ENCODE measurements at regions of chr7 and their contacts with region 1.

Region 1: GRCh38 chr7:2477447-2478398 is 1.5 kb upstream of the GRIFIN start:
- DNase-seq: peak; percentile 62 to 74 (median 67)
- H3K4me3 ChIP-seq: no peak overlapping the region
- H3K27ac ChIP-seq: no peak overlapping the region
- H3K4me1 ChIP-seq: peaks cover 0 to 17% of the 10 kb centered on the region in 2 donors
- H3K27me3 ChIP-seq: peaks cover 10% of the 10 kb centered on the region
- CTCF ChIP-seq: peak; percentile 62 to 92 (median 76)
- POLR2A ChIP-seq: no peak

Region 2: DNA sequence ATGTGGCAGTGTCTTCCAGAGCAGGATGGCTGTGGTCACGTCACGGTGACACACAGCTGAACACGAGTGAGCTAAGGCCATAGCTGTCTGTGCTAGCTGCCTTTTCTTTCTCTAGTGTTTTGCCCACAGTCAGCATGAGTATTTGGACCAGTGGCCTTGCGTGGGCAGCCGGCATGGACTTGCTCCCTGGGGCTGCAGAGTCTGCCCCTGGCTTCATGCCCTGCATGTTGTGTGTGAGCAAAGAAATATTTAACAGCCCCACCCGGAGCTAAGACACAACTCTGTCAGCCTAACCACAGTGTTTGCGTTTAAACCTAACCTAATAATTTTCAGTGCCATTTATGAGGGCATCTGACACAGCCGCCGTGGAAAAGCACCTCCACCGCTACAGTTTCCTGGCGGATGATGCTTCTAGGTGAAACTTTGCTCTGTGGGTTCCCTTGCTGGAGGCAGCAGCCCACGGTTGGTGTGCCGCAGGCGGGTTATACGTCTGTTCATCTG is 59.7 kb before region 1 on chr7:
- intact Hi-C with region 1: no loop called
- DNase-seq: peak in 2 of 7 donors; percentile 26 to 48
- H3K4me3 ChIP-seq: no peak overlapping the region
- H3K27ac ChIP-seq: no peak overlapping the region
- H3K4me1 ChIP-seq: peaks cover 11% of the 10 kb centered on the region in 2 donors
- H3K27me3 ChIP-seq: no peaks in the 10 kb centered on the region
- CTCF ChIP-seq: no peak
- POLR2A ChIP-seq: no peak

Region 3: GRCh38 chr7:2519119-2519930 is 41.6 kb after region 1 on chr7 and contains the start of gene LFNG:
- intact Hi-C with region 1: loop called in 1 of 2 experiments (anchors 2 kb)
- DNase-seq: peak; percentile 80 to 90 (median 89)
- H3K4me3 ChIP-seq: peak within 1 kb of the TSS in 2 of 4 donors; percentile 23 to 71
- H3K27ac ChIP-seq: peak within 1 kb of the TSS in 2 of 5 donors; percentile 57 to 85
- H3K4me1 ChIP-seq: peaks cover 32 to 44% of the 10 kb centered on the region in 2 donors
- H3K27me3 ChIP-seq: no peaks in the 10 kb centered on the region
- CTCF ChIP-seq: peak in 1 of 6 experiments; percentile 24
- POLR2A ChIP-seq: peak; percentile 90 to 91
- total RNA-seq, gene LFNG: 3.7 to 26.1 (median 13.0) TPM

Region 4: GRCh38 chr7:2529161-2530070 is 51.7 kb after region 1 on chr7:
- intact Hi-C with region 1: no loop called
- DNase-seq: peak; percentile 72 to 86 (median 81)
- H3K4me3 ChIP-seq: peak overlapping the region in 1 of 4 donors; percentile 3
- H3K27ac ChIP-seq: peak overlapping the region; percentile 77 to 95 (median 84)
- H3K4me1 ChIP-seq: peaks cover 43 to 51% of the 10 kb centered on the region in 2 donors
- H3K27me3 ChIP-seq: no peaks in the 10 kb centered on the region
- CTCF ChIP-seq: peak in 1 of 6 experiments; percentile 0
- POLR2A ChIP-seq: no peak

Region 5: DNA sequence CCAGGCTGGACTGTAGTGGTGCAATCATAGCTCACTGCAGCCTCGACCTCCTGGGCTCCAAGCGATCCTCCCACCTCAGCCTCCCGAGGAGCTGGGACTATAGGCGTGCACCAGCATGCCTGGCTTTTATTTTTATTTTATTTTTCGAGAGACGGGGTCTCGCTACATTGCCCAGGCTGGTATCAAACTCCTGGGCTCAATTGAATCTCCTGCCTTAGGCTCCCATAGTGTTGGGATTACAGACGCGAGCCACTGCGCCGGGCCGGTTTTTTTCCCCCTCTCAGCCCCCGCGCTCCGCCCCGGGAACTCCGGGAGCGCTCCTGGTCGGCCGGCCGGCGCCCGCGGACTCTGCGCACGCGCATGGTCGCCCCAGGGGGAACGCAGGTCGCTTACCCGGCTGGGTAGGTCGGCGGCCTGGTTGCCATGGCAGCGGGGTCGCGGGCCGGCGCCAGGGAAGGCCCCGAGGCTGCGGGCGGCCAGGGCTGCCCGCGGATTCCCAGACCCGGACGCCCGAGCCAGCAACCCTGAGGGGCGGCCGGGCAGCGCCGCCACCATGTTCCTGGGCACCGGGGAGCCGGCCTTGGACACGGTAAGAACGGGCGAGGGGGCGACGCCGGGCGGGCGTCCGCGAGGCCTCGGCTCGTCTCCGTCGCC is 81.0 kb after region 1 on chr7 and contains the start of gene IQCE:
- intact Hi-C with region 1: loop called in 1 of 2 experiments (anchors 2 kb)
- DNase-seq: peak; percentile 94 to 97 (median 96)
- H3K4me3 ChIP-seq: peak within 1 kb of the TSS; percentile 37 to 99 (median 66)
- H3K27ac ChIP-seq: peak within 1 kb of the TSS; percentile 72 to 90 (median 83)
- H3K4me1 ChIP-seq: peaks cover 28 to 38% of the 10 kb centered on the region in 2 donors
- H3K27me3 ChIP-seq: no peaks in the 10 kb centered on the region
- CTCF ChIP-seq: no peak
- POLR2A ChIP-seq: peak in 1 of 2 donors; percentile 37
- total RNA-seq, gene IQCE: 4.6 to 33.2 (median 13.8) TPM

Region 6: GRCh38 chr7:2567679-2568278 is 90.1 kb after region 1 on chr7:
- intact Hi-C with region 1: loop called in 1 of 2 experiments (anchors 5 kb)
- DNase-seq: peak in 3 of 7 donors; percentile 35 to 71 (median 51)
- H3K4me3 ChIP-seq: no peak overlapping the region
- H3K27ac ChIP-seq: no peak overlapping the region
- H3K4me1 ChIP-seq: peaks cover 2 to 15% of the 10 kb centered on the region in 2 donors
- H3K27me3 ChIP-seq: no peaks in the 10 kb centered on the region
- CTCF ChIP-seq: peak; percentile 12 to 58 (median 40)
- POLR2A ChIP-seq: no peak

Region 7: GRCh38 chr7:2660585-2661408 is 183.1 kb after region 1 on chr7:
- intact Hi-C with region 1: loop called in 1 of 2 experiments (anchors 10 kb)
- DNase-seq: peak in 1 of 7 donors; percentile 29
- H3K4me3 ChIP-seq: no peak overlapping the region
- H3K27ac ChIP-seq: peak overlapping the region in 1 of 5 donors; percentile 86
- H3K4me1 ChIP-seq: peaks cover 17 to 21% of the 10 kb centered on the region in 2 donors
- H3K27me3 ChIP-seq: no peaks in the 10 kb centered on the region
- CTCF ChIP-seq: peak in 1 of 6 experiments; percentile 6
- POLR2A ChIP-seq: no peak

Region 8: GRCh38 chr7:2680792-2681490 is 203.2 kb after region 1 on chr7:
- intact Hi-C with region 1: loop called in 1 of 2 experiments (anchors 10 kb)
- DNase-seq: peak; percentile 80 to 93 (median 89)
- H3K4me3 ChIP-seq: no peak overlapping the region
- H3K27ac ChIP-seq: no peak overlapping the region
- H3K4me1 ChIP-seq: no peaks in the 10 kb centered on the region
- H3K27me3 ChIP-seq: peaks cover 1% of the 10 kb centered on the region
- CTCF ChIP-seq: peak; percentile 59 to 88 (median 76)
- POLR2A ChIP-seq: no peak